Posterior vena cava (tissue), 2 donors: ENCODE measurements at regions of chr3 and their contacts with region 1.

Region 1: GRCh38 chr3:81864272-81864671 is 102.8 kb upstream of the GBE1 start:
- DNase-seq: no peak

Region 2: GRCh38 chr3:81788610-81789009 is 75.7 kb before region 1 on chr3:
- intact Hi-C with region 1: loop called in 1 of 2 experiments (anchors 5 kb)
- DNase-seq: no peak